IMR-90 (cell line): ENCODE measurements at regions of chr14 and their contacts with region 1.

Region 1: GRCh38 chr14:30751641-30752416 is 122.5 kb upstream of the COCH start:
- DNase-seq: no peak
- ATAC-seq: no peak
- H3K4me3 ChIP-seq: no peak overlapping the region
- H3K27ac ChIP-seq: no peak overlapping the region
- H3K4me1 ChIP-seq: no peaks in the 10 kb centered on the region
- H3K27me3 ChIP-seq: peaks cover 20% of the 10 kb centered on the region
- CTCF ChIP-seq: no peak
- POLR2A ChIP-seq: no peak
- RAD21 ChIP-seq: no peak

Region 2: DNA sequence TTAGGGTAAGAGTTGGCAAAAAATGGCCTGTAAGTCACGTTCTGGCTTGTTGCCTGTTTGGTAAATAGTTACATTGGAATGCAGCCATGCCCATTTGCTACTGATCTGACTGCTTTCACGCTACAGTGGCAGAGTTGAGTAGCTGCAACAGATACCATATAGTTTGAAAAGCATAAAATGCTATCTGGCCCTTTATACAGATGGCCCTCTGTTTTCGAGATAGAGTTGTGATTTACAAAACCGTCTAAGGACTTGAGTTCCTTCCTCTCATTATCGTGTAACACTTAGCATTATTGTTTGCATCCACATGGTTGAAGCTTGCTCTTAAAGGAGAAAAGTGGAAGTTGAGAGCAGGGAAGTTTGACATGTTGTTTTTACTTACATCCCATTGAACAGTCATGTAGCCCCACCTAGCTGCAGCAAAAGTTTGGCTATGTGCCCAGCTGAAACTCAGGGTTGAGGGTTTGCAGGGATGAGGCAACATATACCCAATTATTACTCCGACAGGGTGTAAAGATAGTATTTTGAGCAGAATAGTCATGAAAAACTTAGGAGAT is 141.0 kb before region 1 on chr14:
- CTCF ChIA-PET with region 1: no interaction called
- POLR2A ChIA-PET with region 1: no interaction called
- dilution Hi-C with region 1: no loop called
- in situ Hi-C with region 1: no loop called
- intact Hi-C with region 1: no loop called
- DNase-seq: peak; percentile 81
- ATAC-seq: peak; percentile 56
- H3K4me3 ChIP-seq: no peak overlapping the region
- H3K27ac ChIP-seq: no peak overlapping the region
- H3K4me1 ChIP-seq: no peaks in the 10 kb centered on the region
- H3K27me3 ChIP-seq: no peaks in the 10 kb centered on the region
- CTCF ChIP-seq: peak; percentile 53
- POLR2A ChIP-seq: no peak
- RAD21 ChIP-seq: peak; percentile 66

Region 3: GRCh38 chr14:30796707-30797106 is 44.9 kb after region 1 on chr14:
- CTCF ChIA-PET with region 1: no interaction called
- POLR2A ChIA-PET with region 1: no interaction called
- dilution Hi-C with region 1: no loop called
- in situ Hi-C with region 1: no loop called
- intact Hi-C with region 1: loop called (anchors 5 kb)
- DNase-seq: no peak
- ATAC-seq: no peak
- H3K4me3 ChIP-seq: no peak overlapping the region
- H3K27ac ChIP-seq: no peak overlapping the region
- H3K4me1 ChIP-seq: no peaks in the 10 kb centered on the region
- H3K27me3 ChIP-seq: peaks cover 5% of the 10 kb centered on the region; the same call in 1 of the 2 replicates
- CTCF ChIP-seq: no peak
- POLR2A ChIP-seq: no peak
- RAD21 ChIP-seq: no peak

Region 4: DNA sequence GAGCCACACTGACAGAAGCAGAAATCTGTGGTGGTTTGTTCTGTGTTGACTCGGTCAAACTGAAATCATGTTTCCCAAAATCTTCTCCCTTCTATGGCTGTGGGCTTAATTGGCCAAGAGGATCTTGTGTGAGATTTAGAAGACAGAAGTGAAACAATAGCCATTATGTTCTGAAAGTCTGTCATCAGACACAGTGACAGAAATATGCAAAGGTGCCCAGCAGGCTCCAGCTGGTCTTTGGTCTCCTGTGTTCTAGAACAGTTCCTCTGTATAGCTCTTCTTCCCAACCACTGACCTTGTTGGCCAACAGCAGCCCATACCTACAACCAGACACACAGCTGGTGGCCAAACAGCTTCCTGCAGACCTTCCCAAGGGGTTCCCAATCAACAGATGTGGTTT is 97.5 kb after region 1 on chr14:
- CTCF ChIA-PET with region 1: no interaction called
- POLR2A ChIA-PET with region 1: no interaction called
- dilution Hi-C with region 1: no loop called
- in situ Hi-C with region 1: no loop called
- intact Hi-C with region 1: no loop called
- DNase-seq: no peak
- ATAC-seq: no peak
- H3K4me3 ChIP-seq: no peak overlapping the region
- H3K27ac ChIP-seq: no peak overlapping the region
- H3K4me1 ChIP-seq: no peaks in the 10 kb centered on the region
- H3K27me3 ChIP-seq: peaks cover 6% of the 10 kb centered on the region
- CTCF ChIP-seq: no peak
- POLR2A ChIP-seq: no peak
- RAD21 ChIP-seq: no peak

Region 5: DNA sequence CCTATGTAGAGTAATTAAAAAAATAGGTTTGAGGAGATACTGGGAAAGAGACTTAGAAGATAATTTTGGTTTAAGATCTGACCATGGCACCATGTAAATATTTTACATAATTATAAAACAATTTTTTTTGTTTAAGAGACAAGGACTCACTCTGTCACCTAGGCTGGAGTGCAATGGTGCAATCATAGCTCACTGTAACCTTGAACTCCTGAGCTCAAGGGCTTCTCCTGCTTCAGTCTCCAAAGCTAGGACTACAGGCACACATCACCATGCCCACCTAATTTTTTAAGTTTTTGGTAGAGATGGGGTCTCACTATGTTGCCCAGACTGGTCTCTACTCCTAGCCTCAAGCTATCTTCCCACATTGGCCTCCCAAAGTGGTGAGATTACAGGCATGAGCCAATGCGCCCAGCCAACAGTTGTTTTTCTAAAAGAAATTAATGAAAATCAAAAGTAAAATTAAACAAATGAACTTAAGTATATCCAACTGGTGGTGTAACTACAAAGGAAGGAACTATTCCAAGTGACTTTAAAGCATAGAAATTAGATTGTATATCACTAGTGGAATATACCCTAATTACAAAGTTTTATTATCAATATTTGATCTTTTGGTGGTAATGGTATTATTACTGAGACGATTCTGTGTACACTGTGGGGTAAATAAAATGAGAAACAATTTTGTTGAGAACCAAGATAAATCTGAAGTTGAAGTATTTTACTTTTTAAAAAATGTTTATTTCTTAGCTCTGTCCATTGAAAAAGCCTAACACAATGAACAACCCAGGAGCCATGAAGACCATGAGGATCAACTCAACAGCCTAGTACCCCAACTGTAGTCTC is 151.7 kb after region 1 on chr14:
- CTCF ChIA-PET with region 1: no interaction called
- POLR2A ChIA-PET with region 1: no interaction called
- dilution Hi-C with region 1: no loop called
- in situ Hi-C with region 1: no loop called
- intact Hi-C with region 1: no loop called
- DNase-seq: no peak
- ATAC-seq: no peak
- H3K4me3 ChIP-seq: no peak overlapping the region
- H3K27ac ChIP-seq: no peak overlapping the region
- H3K4me1 ChIP-seq: no peaks in the 10 kb centered on the region
- H3K27me3 ChIP-seq: no peaks in the 10 kb centered on the region
- CTCF ChIP-seq: no peak
- POLR2A ChIP-seq: no peak
- RAD21 ChIP-seq: no peak